ENCODE measurements at regions of chr9 and their contacts with region 1.

Region 1: GRCh38 chr9:123349691-123350480 is 6.1 kb upstream of the CRB2 start:
- DNase-seq: peak; percentile 71 to 81
- H3K4me3 ChIP-seq: no peak overlapping the region
- H3K4me3 Mint-ChIP-seq: no peak overlapping the region
- H3K27ac Mint-ChIP-seq: no peak overlapping the region
- H3K4me1 ChIP-seq: 0 out of 2 replicates have a peak, but pooled peaks cover 4% of the 10 kb centered on the region
- H3K4me1 Mint-ChIP-seq: peaks cover under 1% of the 10 kb centered on the region
- H3K27me3 ChIP-seq: no peaks in the 10 kb centered on the region
- H3K27me3 Mint-ChIP-seq: peaks cover 12% of the 10 kb centered on the region
- CTCF ChIP-seq: peak; percentile 93 to 96

Region 2: GRCh38 chr9:122991370-122991830 is 358.5 kb before region 1 on chr9:
- CTCF ChIA-PET with region 1: interaction called, 12 read pairs
- POLR2A ChIA-PET with region 1: no interaction called
- intact Hi-C with region 1: loop called (anchors 5 kb)
- DNase-seq: peak in 1 of 2 experiments; percentile 25
- H3K4me3 ChIP-seq: no peak overlapping the region
- H3K4me3 Mint-ChIP-seq: no peak overlapping the region
- H3K27ac Mint-ChIP-seq: no peak overlapping the region
- H3K4me1 ChIP-seq: no peaks in the 10 kb centered on the region
- H3K4me1 Mint-ChIP-seq: no peaks in the 10 kb centered on the region
- H3K27me3 ChIP-seq: no peaks in the 10 kb centered on the region
- H3K27me3 Mint-ChIP-seq: no peaks in the 10 kb centered on the region
- CTCF ChIP-seq: peak; percentile 47 to 59

Region 3: GRCh38 chr9:123081824-123082223 is 268.1 kb before region 1 on chr9:
- CTCF ChIA-PET with region 1: interaction called, 6 read pairs
- POLR2A ChIA-PET with region 1: no interaction called
- intact Hi-C with region 1: loop called (anchors 1 kb)
- DNase-seq: peak in 1 of 2 experiments; percentile 49
- H3K4me3 ChIP-seq: no peak overlapping the region
- H3K4me3 Mint-ChIP-seq: no peak overlapping the region
- H3K27ac Mint-ChIP-seq: no peak overlapping the region
- H3K4me1 ChIP-seq: peaks cover 4% of the 10 kb centered on the region; the same call in 1 of the 2 replicates
- H3K4me1 Mint-ChIP-seq: no peaks in the 10 kb centered on the region
- H3K27me3 ChIP-seq: no peaks in the 10 kb centered on the region
- H3K27me3 Mint-ChIP-seq: no peaks in the 10 kb centered on the region
- CTCF ChIP-seq: peak; percentile 53 to 72

Region 4: DNA sequence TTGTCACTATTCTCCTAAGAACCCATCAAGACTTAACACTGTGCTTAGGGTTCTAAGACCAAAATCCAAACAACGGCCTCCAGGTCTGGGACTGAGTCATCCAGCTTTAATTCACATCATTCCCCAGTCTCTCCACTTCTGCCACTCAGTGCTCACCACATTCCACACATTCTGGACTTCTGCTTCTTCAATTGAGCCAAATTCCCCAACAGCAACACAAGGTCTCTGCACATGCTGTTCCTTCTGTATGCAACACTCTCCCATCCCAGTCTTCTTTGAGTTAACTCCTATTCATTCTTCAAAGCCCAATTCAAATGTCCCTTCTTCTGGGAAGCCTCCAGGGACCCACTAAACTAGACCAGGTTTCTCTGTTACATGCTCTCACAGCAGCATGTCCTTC is 218.6 kb before region 1 on chr9:
- CTCF ChIA-PET with region 1: interaction called, 16 read pairs
- POLR2A ChIA-PET with region 1: no interaction called
- intact Hi-C with region 1: no loop called
- DNase-seq: no peak
- H3K4me3 ChIP-seq: no peak overlapping the region
- H3K4me3 Mint-ChIP-seq: no peak overlapping the region
- H3K27ac Mint-ChIP-seq: no peak overlapping the region
- H3K4me1 ChIP-seq: peaks cover 23% of the 10 kb centered on the region
- H3K4me1 Mint-ChIP-seq: no peaks in the 10 kb centered on the region
- H3K27me3 ChIP-seq: no peaks in the 10 kb centered on the region
- H3K27me3 Mint-ChIP-seq: no peaks in the 10 kb centered on the region
- CTCF ChIP-seq: no peak

Region 5: DNA sequence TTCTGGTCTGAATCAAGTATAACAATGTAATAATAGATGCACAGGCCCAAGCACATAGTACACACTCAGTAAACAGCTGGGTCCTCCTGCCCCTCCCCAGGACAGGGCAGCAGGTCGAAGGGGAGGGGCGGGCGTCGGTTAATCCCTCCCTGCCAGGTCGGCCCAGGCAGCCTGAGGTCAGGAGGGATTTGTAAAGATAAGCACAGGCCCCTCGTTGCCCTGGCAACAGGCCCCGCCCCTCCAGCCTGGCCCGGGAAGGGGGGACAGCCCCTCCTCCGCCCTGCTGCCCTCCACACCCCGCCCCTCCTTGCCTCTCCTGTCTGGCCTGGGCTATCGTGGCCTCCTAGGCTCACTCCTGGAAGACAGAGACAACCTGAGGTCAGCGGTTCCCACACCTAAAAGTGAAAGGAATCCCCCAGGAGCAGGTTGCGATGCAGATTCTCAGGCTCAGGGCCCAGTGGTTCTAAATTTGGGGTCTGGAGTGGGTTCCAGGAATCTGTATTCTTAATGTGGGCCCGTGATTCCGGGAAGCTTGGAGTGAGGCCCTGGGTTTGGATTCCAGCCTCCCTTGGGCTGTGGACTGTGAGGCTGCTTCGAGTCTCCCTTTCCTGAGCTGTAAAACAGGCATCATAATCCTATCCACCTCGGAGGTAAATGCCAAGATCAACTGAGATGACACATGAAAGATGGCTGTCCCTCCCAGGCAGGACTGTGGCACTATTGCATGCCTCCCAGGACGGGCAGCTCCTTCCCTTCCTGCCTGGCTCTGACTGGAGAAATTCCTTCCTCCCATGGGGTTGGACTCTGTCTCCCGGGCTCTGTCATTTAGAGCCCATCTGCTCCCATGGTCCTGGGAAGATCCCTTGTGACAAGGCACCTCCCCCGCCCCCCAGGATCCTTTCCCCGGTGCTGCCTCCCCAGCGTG is 10.5 kb after region 1 on chr9:
- CTCF ChIA-PET with region 1: interaction called, 12 read pairs
- POLR2A ChIA-PET with region 1: no interaction called
- intact Hi-C with region 1: no loop called
- DNase-seq: peak; percentile 98
- H3K4me3 ChIP-seq: no peak overlapping the region
- H3K4me3 Mint-ChIP-seq: no peak overlapping the region
- H3K27ac Mint-ChIP-seq: peak overlapping the region; percentile 71
- H3K4me1 ChIP-seq: peaks cover 33% of the 10 kb centered on the region
- H3K4me1 Mint-ChIP-seq: peaks cover 15% of the 10 kb centered on the region
- H3K27me3 ChIP-seq: no peaks in the 10 kb centered on the region
- H3K27me3 Mint-ChIP-seq: no peaks in the 10 kb centered on the region
- CTCF ChIP-seq: no peak

Region 6: GRCh38 chr9:123383512-123384170 is 33.8 kb after region 1 on chr9:
- CTCF ChIA-PET with region 1: interaction called, 21 read pairs
- POLR2A ChIA-PET with region 1: no interaction called
- intact Hi-C with region 1: loop called (anchors 1 kb)
- DNase-seq: no peak
- H3K4me3 ChIP-seq: no peak overlapping the region
- H3K4me3 Mint-ChIP-seq: no peak overlapping the region
- H3K27ac Mint-ChIP-seq: no peak overlapping the region
- H3K4me1 ChIP-seq: no peaks in the 10 kb centered on the region
- H3K4me1 Mint-ChIP-seq: no peaks in the 10 kb centered on the region
- H3K27me3 ChIP-seq: no peaks in the 10 kb centered on the region
- H3K27me3 Mint-ChIP-seq: no peaks in the 10 kb centered on the region
- CTCF ChIP-seq: no peak